Adrenal gland (tissue), 19 donors: ENCODE measurements at regions of chr7 and their contacts with region 1.

Region 1: DNA sequence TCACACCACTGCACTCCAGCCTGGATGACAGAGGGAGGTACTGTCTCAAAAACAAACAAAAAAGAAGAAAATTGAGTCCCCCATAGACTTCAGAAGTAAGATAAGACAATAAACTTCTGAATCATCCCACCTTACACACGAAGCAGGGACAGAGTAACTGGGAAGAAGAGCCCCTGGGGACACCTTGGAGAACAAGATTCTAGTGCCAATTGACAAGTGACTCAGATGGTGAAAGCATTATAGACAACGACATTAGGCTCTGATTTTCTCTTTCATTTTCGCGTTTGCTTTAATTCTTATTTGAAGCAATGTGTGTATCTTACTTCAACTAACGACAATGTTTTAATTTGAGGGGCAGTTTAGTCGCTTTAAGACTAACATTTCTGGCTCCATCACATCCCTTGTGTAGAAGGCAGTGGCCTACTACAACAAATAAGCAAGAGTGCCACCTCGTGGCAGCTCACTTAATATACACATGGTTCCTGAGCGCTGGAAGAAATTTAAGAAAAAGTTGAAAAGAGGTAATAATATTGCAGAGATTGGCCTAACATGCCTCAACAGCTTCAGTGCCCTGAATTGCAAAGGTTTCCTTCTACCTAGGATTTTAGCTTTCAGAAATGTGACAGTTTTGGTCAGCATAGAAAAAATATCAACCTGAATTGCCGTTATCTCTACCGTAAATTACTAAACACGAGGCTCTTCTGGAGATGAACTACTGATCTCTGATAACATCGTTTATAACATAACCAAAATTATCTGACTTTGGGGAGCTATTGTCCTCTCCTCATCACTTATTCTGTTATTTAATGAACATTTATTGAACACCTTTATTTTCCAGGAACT is 36.7 kb downstream of the ASNS start:
- DNase-seq: peak; percentile 60 to 90 (median 74)
- H3K4me3 ChIP-seq: no peak overlapping the region
- H3K27ac ChIP-seq: no peak overlapping the region
- H3K4me1 ChIP-seq: no peaks in the 10 kb centered on the region
- H3K27me3 ChIP-seq: peaks cover 4% of the 10 kb centered on the region
- CTCF ChIP-seq: peak; percentile 50 to 70 (median 57)
- POLR2A ChIP-seq: no peak

Region 2: DNA sequence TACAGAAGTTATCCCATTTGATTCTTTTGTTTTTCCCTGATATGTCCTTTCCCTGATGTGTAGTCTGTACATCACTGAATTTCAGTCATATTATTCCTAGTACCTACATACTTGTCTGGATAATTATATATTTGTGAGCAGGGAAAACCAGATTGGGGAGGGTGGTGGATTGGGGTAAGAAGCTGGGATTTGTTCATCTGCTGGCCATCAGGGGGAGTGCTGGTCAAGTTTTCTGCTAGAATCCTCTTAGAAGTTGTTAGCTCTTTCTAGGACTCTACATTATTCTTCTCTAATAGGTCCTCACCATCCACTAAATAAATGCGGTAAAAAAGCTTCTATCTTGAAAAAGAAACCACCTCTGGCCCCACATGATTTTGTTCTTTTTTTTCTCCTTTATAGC is 336.3 kb before region 1 on chr7:
- intact Hi-C with region 1: loop called (anchors 5 to 10 kb)
- DNase-seq: peak; percentile 31 to 62 (median 57)
- H3K4me3 ChIP-seq: no peak overlapping the region
- H3K27ac ChIP-seq: no peak overlapping the region
- H3K4me1 ChIP-seq: no peaks in the 10 kb centered on the region
- H3K27me3 ChIP-seq: no peaks in the 10 kb centered on the region
- CTCF ChIP-seq: peak; percentile 44 to 63 (median 62)
- POLR2A ChIP-seq: no peak

Region 3: DNA sequence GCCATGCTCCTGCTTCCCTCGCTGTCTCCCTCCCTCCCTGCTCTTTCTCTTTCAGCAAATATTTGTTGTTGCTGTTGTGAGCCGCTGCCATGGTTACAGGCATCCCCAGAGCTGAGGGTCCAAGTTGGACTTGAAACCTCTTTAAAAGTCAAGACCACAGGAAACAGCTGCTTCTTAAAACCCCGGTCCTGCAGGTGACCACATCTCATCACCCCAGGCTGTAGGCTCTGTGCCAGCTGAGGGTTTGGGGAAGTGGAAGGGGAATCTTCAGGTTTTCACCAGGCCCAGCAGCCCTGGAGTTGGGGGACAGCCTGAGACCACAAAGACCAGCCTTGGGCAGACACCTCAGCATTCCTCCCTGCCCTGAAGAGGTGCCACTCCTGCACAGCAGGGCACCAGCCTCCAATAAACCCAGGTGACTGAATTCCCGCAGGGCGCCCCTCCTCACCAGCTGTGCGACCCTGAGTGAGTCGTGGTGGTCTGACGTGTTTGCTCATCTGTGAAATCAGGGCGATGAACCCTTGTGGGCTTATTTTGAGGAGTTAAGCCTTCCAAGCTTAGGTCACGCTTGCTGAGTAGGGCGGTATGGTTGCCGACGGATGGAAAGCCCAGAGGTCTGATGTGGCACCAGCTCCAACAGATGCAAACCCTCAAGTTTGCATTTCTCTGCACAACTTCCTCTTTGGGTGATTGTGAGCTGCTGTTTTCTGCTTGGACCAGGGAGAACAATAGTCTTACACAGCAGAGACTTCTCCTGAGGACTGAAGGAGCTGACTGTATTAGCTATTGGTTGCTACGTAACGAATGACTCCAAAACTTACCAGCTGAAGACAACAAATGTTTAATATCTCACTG is 806.4 kb after region 1 on chr7:
- intact Hi-C with region 1: no loop called
- DNase-seq: no peak
- H3K4me3 ChIP-seq: no peak overlapping the region
- H3K27ac ChIP-seq: no peak overlapping the region
- H3K4me1 ChIP-seq: no peaks in the 10 kb centered on the region
- H3K27me3 ChIP-seq: no peaks in the 10 kb centered on the region
- CTCF ChIP-seq: no peak
- POLR2A ChIP-seq: no peak